CD8-positive, alpha-beta memory T cell (primary cell): ENCODE measurements at regions of chr16 and their contacts with region 1.

Region 1: DNA sequence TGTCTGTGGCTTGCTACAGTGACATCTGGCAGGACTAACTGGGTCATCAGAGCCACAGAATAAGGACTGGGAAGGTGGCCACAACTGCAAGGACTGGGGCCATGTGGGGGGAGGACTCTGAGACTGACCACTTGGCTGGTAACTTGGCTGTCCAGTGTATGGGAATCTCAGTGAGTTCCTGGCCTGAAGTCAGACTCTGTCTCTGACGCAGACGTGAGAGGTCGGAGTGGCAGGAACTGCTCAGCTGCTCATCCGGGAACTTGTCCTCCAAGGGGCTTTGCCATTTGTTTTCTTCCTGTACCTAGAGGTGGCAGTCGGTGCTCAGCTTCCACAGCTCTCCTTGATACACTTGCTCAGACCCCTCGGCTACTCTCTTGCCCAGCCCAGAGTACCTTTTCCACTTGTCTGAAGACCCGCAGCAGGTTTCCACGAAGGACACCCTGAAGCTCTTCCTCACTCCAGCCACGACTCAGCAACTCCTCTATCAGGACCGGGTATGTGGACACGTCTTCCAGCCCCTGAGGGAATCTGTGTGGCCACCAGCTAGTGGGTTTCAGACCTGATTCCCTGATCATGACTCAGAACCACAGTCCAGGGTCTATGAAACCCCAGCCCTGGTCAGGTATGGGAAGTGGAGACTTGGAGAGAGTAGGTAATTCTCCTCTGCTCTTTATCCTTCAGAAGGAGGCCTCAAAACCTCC is 7.3 kb upstream of the DPEP3 start:
- DNase-seq: no peak
- H3K4me3 ChIP-seq: no peak overlapping the region
- H3K4me3 Mint-ChIP-seq: no peak overlapping the region
- H3K27ac ChIP-seq: no peak overlapping the region
- H3K27ac Mint-ChIP-seq: peak overlapping the region in 7 of 8 donors; percentile 10 to 96 (median 69)
- H3K4me1 ChIP-seq: peaks cover 24% of the 10 kb centered on the region
- H3K4me1 Mint-ChIP-seq: peaks cover 13 to 25% (median 21%) of the 10 kb centered on the region in 3 donors
- H3K27me3 ChIP-seq: no peaks in the 10 kb centered on the region
- H3K27me3 Mint-ChIP-seq: no peaks in the 10 kb centered on the region

Region 2: DNA sequence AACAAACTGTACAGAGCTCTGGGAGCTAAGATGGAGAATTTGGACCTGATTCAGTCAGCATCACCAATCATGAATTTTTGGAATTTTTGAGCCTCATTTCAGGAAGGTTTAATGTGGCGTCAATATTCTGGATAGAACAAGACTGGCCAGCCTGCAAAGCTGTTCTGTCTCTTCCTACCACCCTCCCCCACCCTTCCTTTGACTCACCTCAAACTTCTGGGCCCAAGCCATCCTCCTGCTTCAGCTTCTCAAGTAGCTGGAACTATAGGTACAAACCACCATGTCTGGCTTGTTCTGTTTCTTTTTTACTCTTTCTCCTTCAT is 392.6 kb before region 1 on chr16:
- CTCF ChIA-PET with region 1: no interaction called
- POLR2A ChIA-PET with region 1: interaction called, 13 read pairs
- DNase-seq: no peak
- H3K4me3 ChIP-seq: no peak overlapping the region
- H3K4me3 Mint-ChIP-seq: no peak overlapping the region
- H3K27ac ChIP-seq: no peak overlapping the region
- H3K27ac Mint-ChIP-seq: peak overlapping the region in 7 of 8 donors; percentile 10 to 91 (median 48)
- H3K4me1 ChIP-seq: peaks cover 11% of the 10 kb centered on the region
- H3K4me1 Mint-ChIP-seq: peaks cover 39 to 60% (median 58%) of the 10 kb centered on the region in 3 donors
- H3K27me3 ChIP-seq: no peaks in the 10 kb centered on the region
- H3K27me3 Mint-ChIP-seq: no peaks in the 10 kb centered on the region

Region 3: GRCh38 chr16:67951485-67951884 is 36.1 kb before region 1 on chr16:
- CTCF ChIA-PET with region 1: no interaction called
- POLR2A ChIA-PET with region 1: no interaction called
- DNase-seq: no peak
- H3K4me3 ChIP-seq: no peak overlapping the region
- H3K4me3 Mint-ChIP-seq: no peak overlapping the region
- H3K27ac ChIP-seq: no peak overlapping the region
- H3K27ac Mint-ChIP-seq: no peak overlapping the region
- H3K4me1 ChIP-seq: no peaks in the 10 kb centered on the region
- H3K4me1 Mint-ChIP-seq: no peaks in the 10 kb centered on the region
- H3K27me3 ChIP-seq: no peaks in the 10 kb centered on the region
- H3K27me3 Mint-ChIP-seq: no peaks in the 10 kb centered on the region

Region 4: DNA sequence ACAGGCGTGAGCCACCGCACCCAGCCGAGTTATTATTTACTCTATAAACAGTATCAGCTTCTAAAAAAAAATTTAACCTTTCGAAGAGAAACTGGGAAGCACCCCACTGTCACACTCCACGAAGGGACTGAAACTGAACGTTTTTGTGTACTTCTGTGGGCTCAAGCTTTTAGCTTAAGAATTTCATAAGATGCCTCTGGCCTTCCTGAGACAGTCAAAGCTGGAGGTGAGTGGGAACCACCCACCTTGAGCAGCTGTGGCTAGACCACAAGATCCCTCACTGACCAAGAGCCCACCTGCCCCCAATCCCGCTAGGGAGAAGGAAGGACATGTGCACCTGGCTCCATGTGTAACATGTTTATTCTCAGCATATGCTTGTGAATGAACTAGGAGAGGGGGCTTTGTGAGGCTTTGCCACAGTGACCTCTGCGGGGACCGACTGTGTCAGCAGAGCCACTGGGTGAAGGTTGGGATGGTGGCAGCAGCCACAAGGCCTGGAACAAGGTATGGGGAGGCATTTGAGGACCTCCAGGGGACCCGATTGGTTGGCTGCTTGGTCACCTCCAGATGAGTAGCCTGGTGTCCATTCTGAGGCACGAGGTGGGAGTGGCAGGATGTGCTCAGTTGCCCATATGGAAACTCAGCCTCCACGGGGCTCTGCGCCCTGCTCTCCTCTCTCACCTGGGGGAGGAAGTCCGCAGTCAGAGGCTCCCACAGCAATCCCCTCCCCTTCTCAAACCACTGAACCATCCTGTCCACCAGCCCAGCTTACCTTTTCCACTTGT is 12.1 kb before region 1 on chr16:
- CTCF ChIA-PET with region 1: no interaction called
- POLR2A ChIA-PET with region 1: no interaction called
- DNase-seq: no peak
- H3K4me3 ChIP-seq: no peak overlapping the region
- H3K4me3 Mint-ChIP-seq: no peak overlapping the region
- H3K27ac ChIP-seq: no peak overlapping the region
- H3K27ac Mint-ChIP-seq: peak overlapping the region in 1 of 8 donors; percentile 32
- H3K4me1 ChIP-seq: no peaks in the 10 kb centered on the region
- H3K4me1 Mint-ChIP-seq: no peaks in the 10 kb centered on the region
- H3K27me3 ChIP-seq: no peaks in the 10 kb centered on the region
- H3K27me3 Mint-ChIP-seq: peaks cover 0 to 2% of the 10 kb centered on the region in 2 donors